OCI-LY7 (cell line): ENCODE measurements at regions of chr4 and their contacts with region 1.

Region 1: DNA sequence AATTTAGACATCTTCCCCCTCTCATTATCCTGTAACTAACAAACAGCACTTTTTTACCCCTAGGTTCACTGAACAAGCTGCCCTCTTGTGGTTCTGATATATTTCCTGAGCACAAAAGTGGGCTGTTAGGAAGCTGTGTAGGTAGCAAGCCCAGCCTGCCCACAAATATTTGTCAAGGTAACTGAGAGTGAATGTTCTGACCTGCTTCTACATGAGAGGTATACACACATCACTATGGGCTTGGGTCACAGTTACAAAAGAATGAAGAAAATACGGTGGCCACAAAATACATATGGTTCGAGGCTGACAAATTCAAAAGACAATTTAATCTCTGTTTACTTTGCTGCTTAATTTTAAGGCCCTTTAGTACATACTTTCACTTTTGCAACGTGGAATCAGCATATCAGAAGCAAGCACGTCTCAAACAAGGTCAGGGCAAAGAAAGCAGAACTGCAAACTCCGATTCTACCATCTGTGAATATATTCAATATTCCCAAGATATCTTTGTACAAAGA is 78.7 kb downstream of the RBM47 start:
- DNase-seq: peak; percentile 85
- H3K4me3 ChIP-seq: peak overlapping the region; percentile 56
- H3K27ac ChIP-seq: peak overlapping the region; percentile 39
- H3K4me1 ChIP-seq: peaks cover 32% of the 10 kb centered on the region
- CTCF ChIP-seq: peak; percentile 82

Region 2: DNA sequence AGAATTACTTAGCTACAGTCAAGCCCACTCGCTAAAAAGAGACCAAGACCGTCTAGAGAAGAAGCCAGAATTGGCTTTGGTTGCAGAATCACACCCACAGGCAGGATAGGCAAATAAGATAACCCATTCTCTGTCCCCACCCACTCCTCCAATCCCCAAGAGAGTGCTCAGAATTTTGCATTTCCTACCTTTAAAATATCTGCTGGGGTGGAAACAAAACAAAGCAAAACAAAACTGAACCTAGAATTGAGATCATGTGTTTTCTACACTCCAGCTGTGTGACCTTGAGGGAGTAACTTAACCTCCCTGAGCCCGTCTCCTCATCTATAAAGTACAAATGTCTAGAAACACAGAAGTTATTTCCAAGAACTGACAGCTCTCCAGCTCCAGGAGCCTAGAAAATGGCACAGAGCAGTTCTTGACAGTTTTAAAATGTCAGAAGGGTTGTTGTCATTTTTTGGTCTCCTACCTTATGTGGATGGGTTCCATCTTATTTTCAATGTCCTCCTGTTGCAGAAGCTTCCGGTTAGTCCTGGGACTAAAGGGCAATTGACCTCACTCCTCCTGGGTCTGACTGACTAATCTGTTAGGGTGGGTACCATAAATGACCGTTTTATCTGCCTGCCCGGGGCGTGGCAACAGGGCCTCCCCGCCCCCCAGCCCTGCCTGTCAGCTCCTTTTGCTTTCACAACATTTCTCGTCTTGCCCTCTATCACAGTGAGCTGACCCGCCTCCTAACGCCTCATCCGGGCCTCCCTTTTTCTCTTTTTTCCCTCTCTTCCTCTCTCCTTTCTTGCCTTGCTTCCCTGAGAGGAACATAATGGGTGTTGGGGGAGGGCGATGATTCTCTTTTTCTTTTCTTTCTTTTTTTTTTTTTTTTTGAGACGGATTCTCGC is 35.4 kb before region 1 on chr4:
- CTCF ChIA-PET with region 1: interaction called, 16 read pairs
- POLR2A ChIA-PET with region 1: no interaction called
- intact Hi-C with region 1: loop called (anchors 2 kb)
- DNase-seq: peak; percentile 91
- H3K4me3 ChIP-seq: peak overlapping the region; percentile 70
- H3K27ac ChIP-seq: peak overlapping the region; percentile 89
- H3K4me1 ChIP-seq: peaks cover 65% of the 10 kb centered on the region
- CTCF ChIP-seq: no peak

Region 3: DNA sequence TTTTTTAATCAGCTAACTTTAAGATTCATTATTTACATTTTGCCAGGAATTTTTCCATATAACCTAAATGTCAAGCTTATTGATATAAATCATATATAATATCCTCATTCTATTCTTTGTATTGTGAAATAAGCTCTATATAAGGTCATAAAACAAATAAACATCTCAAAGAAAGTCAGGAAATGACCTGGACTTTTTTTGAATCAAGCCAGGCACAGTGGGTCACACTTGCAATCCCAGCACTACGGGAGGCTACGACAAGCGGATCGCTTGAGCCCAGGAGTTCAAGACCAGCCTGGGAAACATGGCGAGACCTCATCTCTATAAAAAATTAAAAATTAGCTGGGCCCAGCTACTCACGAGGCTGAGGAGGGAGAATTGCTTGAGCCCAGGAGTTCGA is 10.2 kb before region 1 on chr4:
- CTCF ChIA-PET with region 1: no interaction called
- POLR2A ChIA-PET with region 1: interaction called, 12 read pairs
- intact Hi-C with region 1: no loop called
- DNase-seq: no peak
- H3K4me3 ChIP-seq: no peak overlapping the region
- H3K27ac ChIP-seq: no peak overlapping the region
- H3K4me1 ChIP-seq: peaks cover 25% of the 10 kb centered on the region
- CTCF ChIP-seq: no peak

Region 4: DNA sequence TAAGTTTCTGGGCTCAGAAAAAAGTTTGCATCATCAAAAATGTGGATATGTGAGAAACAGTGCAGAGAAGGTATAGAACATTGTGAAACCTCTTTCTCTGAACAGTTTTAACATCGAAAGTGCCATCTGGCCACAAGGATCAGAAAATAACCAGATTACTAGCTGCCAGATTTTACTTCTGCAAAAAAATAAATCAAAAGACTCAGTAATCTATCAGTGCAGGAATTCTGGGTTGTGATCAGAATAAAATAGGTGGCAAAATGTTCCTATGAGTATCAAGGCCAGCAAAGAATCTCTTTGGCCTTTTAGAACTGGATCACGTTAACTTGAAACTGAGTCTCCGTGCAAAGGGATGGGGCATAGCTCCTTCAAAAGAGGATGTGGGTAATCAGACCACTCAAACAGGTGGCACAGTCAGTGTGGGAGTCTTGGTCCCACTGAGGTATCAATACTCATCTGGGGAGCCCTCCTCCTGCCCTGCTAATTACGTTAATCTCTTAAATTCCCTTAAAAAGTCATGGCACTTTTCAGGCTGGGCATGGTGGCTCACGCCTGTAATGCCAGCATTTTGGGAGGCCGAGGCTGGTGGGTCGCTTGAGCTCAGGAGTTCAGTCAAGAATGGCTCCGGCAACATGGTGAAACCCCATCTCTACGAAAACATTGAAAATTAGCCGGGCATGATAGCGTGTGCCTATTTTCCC is 105.3 kb after region 1 on chr4:
- CTCF ChIA-PET with region 1: no interaction called
- POLR2A ChIA-PET with region 1: no interaction called
- intact Hi-C with region 1: loop called (anchors 5 kb)
- DNase-seq: peak; percentile 84
- H3K4me3 ChIP-seq: peak overlapping the region; percentile 31
- H3K27ac ChIP-seq: peak overlapping the region; percentile 75
- H3K4me1 ChIP-seq: peaks cover 33% of the 10 kb centered on the region
- CTCF ChIP-seq: no peak

Region 5: GRCh38 chr4:40719008-40719623 is 168.1 kb after region 1 on chr4:
- CTCF ChIA-PET with region 1: no interaction called
- POLR2A ChIA-PET with region 1: interaction called, 5 read pairs
- intact Hi-C with region 1: loop called (anchors 1 kb)
- DNase-seq: peak; percentile 71
- H3K4me3 ChIP-seq: no peak overlapping the region
- H3K27ac ChIP-seq: no peak overlapping the region
- H3K4me1 ChIP-seq: peaks cover 8% of the 10 kb centered on the region
- CTCF ChIP-seq: peak; percentile 84

Region 6: DNA sequence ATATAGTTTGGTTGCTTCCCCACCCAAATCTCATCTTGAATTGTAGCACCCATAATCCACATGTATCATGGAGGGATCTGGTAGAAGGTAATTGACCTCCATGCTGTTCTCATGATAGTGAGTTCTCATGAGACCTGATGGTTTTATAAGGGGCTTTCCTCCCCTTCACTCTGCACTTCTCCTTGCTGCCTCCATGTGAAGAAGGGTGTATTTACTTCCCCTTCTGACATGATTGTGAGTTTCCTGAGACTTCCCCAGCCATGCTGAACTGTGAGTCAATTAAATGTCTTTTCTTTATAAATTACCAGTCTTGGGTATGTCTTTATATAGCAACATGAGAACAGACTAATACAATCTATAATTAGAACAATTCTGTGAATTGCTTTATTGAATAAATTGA is 1418.7 kb after region 1 on chr4:
- CTCF ChIA-PET with region 1: no interaction called
- POLR2A ChIA-PET with region 1: no interaction called
- intact Hi-C with region 1: no loop called
- DNase-seq: no peak
- H3K4me3 ChIP-seq: no peak overlapping the region
- H3K27ac ChIP-seq: no peak overlapping the region
- H3K4me1 ChIP-seq: no peaks in the 10 kb centered on the region
- CTCF ChIP-seq: no peak